PC-9 (cell line): ENCODE measurements at regions of chr14 and their contacts with region 1.

Region 1: GRCh38 chr14:74841230-74842207 is 34.4 kb downstream of the PROX2 start:
- DNase-seq: no peak
- H3K4me3 ChIP-seq: no peak overlapping the region
- H3K27ac ChIP-seq: no peak overlapping the region
- H3K4me1 ChIP-seq: no peaks in the 10 kb centered on the region
- H3K27me3 ChIP-seq: no peaks in the 10 kb centered on the region
- CTCF ChIP-seq: no peak

Region 2: GRCh38 chr14:74202113-74202512 is 639.4 kb before region 1 on chr14:
- CTCF ChIA-PET with region 1: interaction called, 15 read pairs
- POLR2A ChIA-PET with region 1: no interaction called
- intact Hi-C with region 1: no loop called
- DNase-seq: no peak
- H3K4me3 ChIP-seq: no peak overlapping the region
- H3K27ac ChIP-seq: no peak overlapping the region
- H3K4me1 ChIP-seq: no peaks in the 10 kb centered on the region
- H3K27me3 ChIP-seq: no peaks in the 10 kb centered on the region
- CTCF ChIP-seq: no peak

Region 3: DNA sequence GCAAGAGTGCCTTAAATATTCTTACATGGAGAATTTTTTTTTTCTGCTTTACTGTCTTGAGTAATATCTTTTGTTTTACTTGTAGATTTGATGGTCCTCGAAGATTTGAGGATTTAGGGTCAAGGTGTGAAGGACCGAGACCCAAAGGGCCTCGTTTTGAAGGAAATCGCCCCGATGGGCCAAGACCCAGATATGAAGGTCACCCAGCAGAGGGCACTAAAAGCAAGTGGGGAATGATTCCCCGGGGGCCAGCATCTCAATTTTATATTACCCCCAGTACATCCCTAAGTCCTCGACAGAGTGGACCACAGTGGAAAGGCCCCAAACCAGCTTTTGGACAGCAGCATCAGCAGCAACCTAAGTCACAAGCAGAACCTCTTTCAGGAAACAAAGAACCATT is 44.0 kb before region 1 on chr14:
- CTCF ChIA-PET with region 1: no interaction called
- POLR2A ChIA-PET with region 1: no interaction called
- intact Hi-C with region 1: no loop called
- DNase-seq: no peak
- H3K4me3 ChIP-seq: no peak overlapping the region
- H3K27ac ChIP-seq: no peak overlapping the region
- H3K4me1 ChIP-seq: no peaks in the 10 kb centered on the region
- H3K27me3 ChIP-seq: no peaks in the 10 kb centered on the region
- CTCF ChIP-seq: no peak

Region 4: DNA sequence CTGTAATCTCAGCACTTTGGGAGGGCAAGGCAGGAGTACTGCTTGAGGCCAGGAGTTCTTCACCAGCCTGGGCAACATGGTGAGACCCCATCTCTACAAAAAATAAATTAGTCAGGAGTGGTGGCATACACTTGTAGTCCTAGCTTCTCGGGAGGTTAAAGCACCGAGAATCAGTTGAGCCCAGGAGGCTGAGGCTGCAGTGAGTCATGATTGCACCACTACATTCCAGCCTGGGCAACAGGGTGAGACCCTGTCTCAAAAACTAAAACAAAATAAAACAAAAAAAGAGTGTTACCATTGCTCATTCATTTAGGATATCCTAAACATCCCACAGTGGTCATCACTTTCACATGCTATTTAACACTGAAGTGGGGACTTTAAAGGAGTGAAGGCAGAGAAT is 277.5 kb after region 1 on chr14:
- CTCF ChIA-PET with region 1: no interaction called
- POLR2A ChIA-PET with region 1: interaction called, 21 read pairs
- intact Hi-C with region 1: no loop called
- DNase-seq: no peak
- H3K4me3 ChIP-seq: no peak overlapping the region
- H3K27ac ChIP-seq: no peak overlapping the region
- H3K4me1 ChIP-seq: peaks cover 23% of the 10 kb centered on the region
- H3K27me3 ChIP-seq: no peaks in the 10 kb centered on the region
- CTCF ChIP-seq: no peak